Mammary epithelial cell (primary cell): ENCODE measurements at regions of chr2 and their contacts with region 1.

Region 1: GRCh38 chr2:183248866-183249567 is 124.8 kb downstream of the NUP35 start:
- DNase-seq: peak; percentile 42
- H3K4me3 ChIP-seq: no peak overlapping the region
- H3K27ac ChIP-seq: peak overlapping the region; percentile 91
- H3K4me1 ChIP-seq: peaks cover 25% of the 10 kb centered on the region
- H3K27me3 ChIP-seq: no peaks in the 10 kb centered on the region
- CTCF ChIP-seq: peak; percentile 47 to 53

Region 2: DNA sequence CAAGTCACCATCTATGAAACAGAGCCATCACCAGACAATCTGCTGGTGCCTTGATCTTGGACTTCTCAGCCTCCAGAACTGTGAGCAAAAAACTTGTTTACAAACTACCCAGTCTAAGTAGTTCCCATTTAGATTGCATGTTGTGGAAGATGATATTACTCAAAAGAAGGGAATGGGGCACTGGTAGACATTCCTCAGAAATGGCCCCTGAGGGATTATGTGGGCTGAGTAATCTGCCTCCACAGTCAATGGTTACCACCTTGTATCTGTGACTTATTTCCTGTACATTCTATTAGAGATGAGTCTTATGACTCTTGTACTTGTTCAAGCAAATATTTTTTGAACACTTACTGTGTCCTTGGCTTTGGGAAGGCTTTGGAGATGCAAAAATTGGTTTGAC is 35.6 kb after region 1 on chr2:
- CTCF ChIA-PET with region 1: interaction called, 8 read pairs
- dilution Hi-C with region 1: no loop called
- in situ Hi-C with region 1: no loop called
- intact Hi-C with region 1: loop called (anchors 1 kb)
- DNase-seq: peak; percentile 97
- H3K4me3 ChIP-seq: no peak overlapping the region
- H3K27ac ChIP-seq: peak overlapping the region; percentile 93
- H3K4me1 ChIP-seq: peaks cover 22% of the 10 kb centered on the region
- H3K27me3 ChIP-seq: no peaks in the 10 kb centered on the region
- CTCF ChIP-seq: no peak

Region 3: DNA sequence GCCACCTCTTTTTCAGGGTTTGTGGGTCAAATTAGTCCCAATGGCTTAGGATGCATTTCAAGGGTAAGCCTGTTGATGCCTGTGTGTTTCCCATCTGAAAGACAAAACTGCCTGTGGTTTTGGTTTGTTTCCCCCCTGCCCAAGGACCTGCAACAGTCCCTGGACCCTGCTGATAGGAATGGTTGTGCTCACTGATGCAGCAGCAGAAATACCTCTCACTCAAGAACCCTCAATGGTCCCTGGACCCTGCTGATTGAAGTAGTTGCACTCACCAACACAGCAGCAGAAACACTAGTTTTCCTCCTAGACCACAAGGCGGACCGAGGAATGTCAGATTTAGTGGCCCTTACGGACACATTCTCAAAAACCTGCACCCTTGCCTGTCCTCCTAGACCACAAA is 262.1 kb after region 1 on chr2:
- CTCF ChIA-PET with region 1: no interaction called
- dilution Hi-C with region 1: no loop called
- in situ Hi-C with region 1: no loop called
- intact Hi-C with region 1: no loop called
- DNase-seq: no peak
- H3K4me3 ChIP-seq: no peak overlapping the region
- H3K27ac ChIP-seq: no peak overlapping the region
- H3K4me1 ChIP-seq: no peaks in the 10 kb centered on the region
- H3K27me3 ChIP-seq: no peaks in the 10 kb centered on the region
- CTCF ChIP-seq: no peak